ENCODE measurements at regions of chr6 and their contacts with region 1.

Region 1: DNA sequence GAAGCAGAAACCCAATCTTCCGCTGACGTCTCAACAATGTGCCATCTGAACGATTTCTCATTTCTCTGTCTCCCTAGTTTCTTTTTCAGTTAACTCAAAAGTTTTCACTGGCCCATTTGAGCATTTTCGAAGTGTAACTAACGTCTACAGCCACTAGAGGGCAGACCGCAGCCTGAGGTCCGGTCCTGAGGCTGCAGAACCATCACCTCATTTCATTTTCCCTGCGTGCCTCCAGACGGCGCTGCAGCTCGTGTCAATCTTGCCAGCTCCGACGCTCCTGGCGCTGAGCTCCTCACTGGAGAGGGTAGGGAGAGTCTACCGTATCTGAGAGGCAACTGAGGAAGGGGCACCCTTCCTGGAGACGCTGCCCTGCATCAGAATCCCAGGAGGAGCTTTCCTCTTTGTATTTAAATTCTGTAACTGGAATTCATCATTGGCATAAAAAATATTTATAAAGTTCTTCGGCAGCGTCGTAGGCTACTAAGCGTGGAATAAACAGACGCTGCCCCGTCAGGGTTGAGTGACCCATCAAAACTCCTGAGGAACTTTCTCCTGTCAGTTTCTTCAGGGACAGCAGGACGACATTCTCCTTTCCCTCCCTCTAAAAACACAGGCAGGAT is 28.5 kb upstream of the DTNBP1 start:
- DNase-seq: peak; percentile 86
- H3K4me3 Mint-ChIP-seq: peak overlapping the region; percentile 63
- H3K27ac Mint-ChIP-seq: no peak overlapping the region
- H3K4me1 Mint-ChIP-seq: no peaks in the 10 kb centered on the region
- H3K27me3 Mint-ChIP-seq: no peaks in the 10 kb centered on the region
- CTCF ChIP-seq: peak; percentile 98

Region 2: GRCh38 chr6:15708231-15708630 is 16.9 kb after region 1 on chr6:
- CTCF ChIA-PET with region 1: interaction called, 24 read pairs
- POLR2A ChIA-PET with region 1: no interaction called
- intact Hi-C with region 1: no loop called
- DNase-seq: no peak
- H3K4me3 Mint-ChIP-seq: no peak overlapping the region
- H3K27ac Mint-ChIP-seq: no peak overlapping the region
- H3K4me1 Mint-ChIP-seq: no peaks in the 10 kb centered on the region
- H3K27me3 Mint-ChIP-seq: no peaks in the 10 kb centered on the region
- CTCF ChIP-seq: no peak

Region 3: GRCh38 chr6:15893556-15894268 is 202.4 kb after region 1 on chr6:
- CTCF ChIA-PET with region 1: no interaction called
- POLR2A ChIA-PET with region 1: no interaction called
- intact Hi-C with region 1: no loop called
- DNase-seq: peak; percentile 45
- H3K4me3 Mint-ChIP-seq: no peak overlapping the region
- H3K27ac Mint-ChIP-seq: no peak overlapping the region
- H3K4me1 Mint-ChIP-seq: no peaks in the 10 kb centered on the region
- H3K27me3 Mint-ChIP-seq: no peaks in the 10 kb centered on the region
- CTCF ChIP-seq: peak; percentile 61

Region 4: DNA sequence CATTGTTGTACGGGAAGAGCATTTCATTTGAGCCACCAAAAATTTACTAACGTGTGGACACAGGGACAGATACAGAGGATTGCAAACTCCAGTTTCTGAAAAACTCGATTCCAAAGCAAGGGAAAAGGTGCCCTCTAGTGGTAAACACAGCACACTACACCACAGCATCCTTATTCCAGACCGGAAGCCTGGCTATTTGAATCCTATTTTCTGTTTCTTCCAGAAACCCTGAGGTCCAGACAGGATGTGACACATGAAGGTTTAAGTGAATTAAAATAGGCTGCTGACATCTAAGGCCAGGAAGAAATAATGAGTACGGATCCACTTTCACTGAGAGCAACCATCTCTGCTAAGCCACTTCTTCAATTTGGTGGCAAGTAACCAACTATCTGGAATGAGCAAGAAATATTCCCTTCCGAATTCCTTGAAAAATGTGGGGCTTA is 515.3 kb after region 1 on chr6:
- CTCF ChIA-PET with region 1: interaction called, 34 read pairs
- POLR2A ChIA-PET with region 1: interaction called, 6 read pairs
- intact Hi-C with region 1: loop called (anchors 1 kb)
- DNase-seq: peak; percentile 60
- H3K4me3 Mint-ChIP-seq: no peak overlapping the region
- H3K27ac Mint-ChIP-seq: no peak overlapping the region
- H3K4me1 Mint-ChIP-seq: peaks cover 4% of the 10 kb centered on the region
- H3K27me3 Mint-ChIP-seq: peaks cover 13% of the 10 kb centered on the region
- CTCF ChIP-seq: peak; percentile 76